ENCODE measurements at regions of chr12 and their contacts with region 1.

Region 1: GRCh38 chr12:9367201-9367600 is 159.0 kb upstream of the PZP start:
- DNase-seq: no peak
- H3K4me3 ChIP-seq: no peak overlapping the region
- H3K27ac ChIP-seq: no peak overlapping the region
- H3K4me1 ChIP-seq: peaks cover 0 to 22% (median 0%) of the 10 kb centered on the region in 4 experiments
- H3K27me3 ChIP-seq: no peaks in the 10 kb centered on the region

Region 2: GRCh38 chr12:9378430-9378835 is 11.2 kb after region 1 on chr12:
- CTCF ChIA-PET with region 1: interaction called, 38 read pairs
- POLR2A ChIA-PET with region 1: no interaction called
- DNase-seq: no peak
- H3K4me3 ChIP-seq: no peak overlapping the region
- H3K27ac ChIP-seq: no peak overlapping the region
- H3K4me1 ChIP-seq: peaks cover 0 to 15% (median 8%) of the 10 kb centered on the region in 4 experiments
- H3K27me3 ChIP-seq: no peaks in the 10 kb centered on the region

Measured in common myeloid progenitor, CD34-positive (primary cell).